Right lobe of liver (tissue), 6 donors: ENCODE measurements at regions of chr12 and their contacts with region 1.

Region 1: GRCh38 chr12:6335451-6336078 is 6.3 kb downstream of the TNFRSF1A start:
- DNase-seq: peak; percentile 83 to 88 (median 85)
- ATAC-seq: peak; percentile 38 to 54 (median 48)
- H3K4me3 ChIP-seq: peak overlapping the region; percentile 33 to 100 (median 51)
- H3K27ac ChIP-seq: peak overlapping the region; percentile 90 to 100 (median 97)
- H3K4me1 ChIP-seq: peaks cover 0 to 62% (median 24%) of the 10 kb centered on the region in 4 donors
- H3K27me3 ChIP-seq: no peaks in the 10 kb centered on the region
- CTCF ChIP-seq: peak; percentile 31 to 44 (median 35)
- POLR2A ChIP-seq: peak; percentile 42

Region 2: DNA sequence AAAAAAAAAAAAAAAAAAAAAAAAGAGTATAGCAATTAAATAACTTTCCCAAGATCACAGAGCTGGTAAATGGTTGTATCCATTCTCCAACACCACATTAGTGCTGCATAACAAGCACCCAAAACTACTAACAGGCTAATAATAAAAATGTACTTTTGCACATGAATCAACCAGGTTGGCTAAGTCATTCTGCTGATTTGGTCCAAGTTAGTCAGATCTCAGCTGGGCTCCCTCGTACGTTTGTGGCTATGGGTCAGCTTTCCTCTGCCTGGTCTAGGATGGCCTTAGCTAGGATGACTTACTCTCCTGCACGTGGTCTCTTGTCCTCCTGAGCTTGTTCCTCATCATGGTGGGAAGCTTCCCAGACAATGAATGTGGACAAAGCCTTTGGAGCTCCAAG is 32.9 kb before region 1 on chr12:
- intact Hi-C with region 1: no loop called
- DNase-seq: no peak
- ATAC-seq: no peak
- H3K4me3 ChIP-seq: no peak overlapping the region
- H3K27ac ChIP-seq: no peak overlapping the region
- H3K4me1 ChIP-seq: no peaks in the 10 kb centered on the region
- H3K27me3 ChIP-seq: no peaks in the 10 kb centered on the region
- CTCF ChIP-seq: no peak
- POLR2A ChIP-seq: no peak

Region 3: DNA sequence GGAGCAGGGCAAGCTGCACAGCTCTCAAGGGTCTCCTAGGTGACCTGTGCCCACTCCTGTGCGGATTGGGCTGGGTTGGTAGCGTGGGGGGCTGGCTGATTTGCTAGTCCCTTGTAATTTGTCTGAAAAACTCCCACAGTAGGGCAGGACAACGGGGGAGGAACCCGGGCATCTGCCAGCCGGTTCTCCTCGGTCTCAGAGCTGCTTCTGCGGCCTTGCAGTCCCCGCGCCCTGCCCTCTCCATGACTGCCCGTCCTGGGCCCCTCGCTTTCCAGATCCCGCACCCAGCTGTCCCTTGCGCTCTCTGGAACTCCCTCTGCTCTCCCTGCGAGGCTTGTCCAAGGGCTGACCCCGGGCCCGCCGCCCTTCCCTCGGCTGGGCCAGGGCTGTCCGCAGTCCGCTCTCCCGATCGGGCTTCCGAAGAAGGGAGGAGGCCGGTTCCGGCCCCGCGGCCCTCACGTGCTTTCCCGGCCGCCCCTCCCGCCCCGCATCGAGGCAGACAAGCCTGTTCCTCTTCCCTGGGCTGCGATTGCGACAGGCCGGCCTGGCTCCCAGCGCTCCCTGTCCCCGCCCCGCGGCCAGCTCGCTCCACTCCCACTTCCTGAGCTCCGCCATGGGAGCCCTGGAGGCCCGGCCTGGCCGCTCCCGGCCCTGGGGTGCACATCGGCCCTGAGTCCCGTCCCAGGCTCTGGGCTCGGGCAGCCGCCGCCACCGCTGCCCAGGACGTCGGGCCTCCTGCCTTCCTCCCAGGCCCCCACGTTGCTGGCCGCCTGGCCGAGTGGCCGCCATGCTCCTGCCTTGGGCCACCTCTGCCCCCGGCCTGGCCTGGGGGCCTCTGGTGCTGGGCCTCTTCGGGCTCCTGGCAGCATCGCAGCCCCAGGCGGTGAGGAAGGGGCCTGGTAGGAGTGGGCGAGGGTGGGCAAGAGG is 48.3 kb after region 1 on chr12 and contains the start of gene LTBR:
- intact Hi-C with region 1: loop called (anchors 10 kb)
- DNase-seq: peak; percentile 98 to 99 (median 99)
- ATAC-seq: peak; percentile 89 to 95 (median 92)
- H3K4me3 ChIP-seq: peak within 1 kb of the TSS; percentile 98 to 100 (median 99)
- H3K27ac ChIP-seq: peak within 1 kb of the TSS; percentile 93 to 97 (median 94)
- H3K4me1 ChIP-seq: peaks cover 0 to 32% (median 10%) of the 10 kb centered on the region in 4 donors
- H3K27me3 ChIP-seq: no peaks in the 10 kb centered on the region
- CTCF ChIP-seq: peak in 2 of 4 donors; percentile 11 to 28
- POLR2A ChIP-seq: peak; percentile 91
- total RNA-seq, gene LTBR: 83.8 to 235 (median 103) TPM

Region 4: DNA sequence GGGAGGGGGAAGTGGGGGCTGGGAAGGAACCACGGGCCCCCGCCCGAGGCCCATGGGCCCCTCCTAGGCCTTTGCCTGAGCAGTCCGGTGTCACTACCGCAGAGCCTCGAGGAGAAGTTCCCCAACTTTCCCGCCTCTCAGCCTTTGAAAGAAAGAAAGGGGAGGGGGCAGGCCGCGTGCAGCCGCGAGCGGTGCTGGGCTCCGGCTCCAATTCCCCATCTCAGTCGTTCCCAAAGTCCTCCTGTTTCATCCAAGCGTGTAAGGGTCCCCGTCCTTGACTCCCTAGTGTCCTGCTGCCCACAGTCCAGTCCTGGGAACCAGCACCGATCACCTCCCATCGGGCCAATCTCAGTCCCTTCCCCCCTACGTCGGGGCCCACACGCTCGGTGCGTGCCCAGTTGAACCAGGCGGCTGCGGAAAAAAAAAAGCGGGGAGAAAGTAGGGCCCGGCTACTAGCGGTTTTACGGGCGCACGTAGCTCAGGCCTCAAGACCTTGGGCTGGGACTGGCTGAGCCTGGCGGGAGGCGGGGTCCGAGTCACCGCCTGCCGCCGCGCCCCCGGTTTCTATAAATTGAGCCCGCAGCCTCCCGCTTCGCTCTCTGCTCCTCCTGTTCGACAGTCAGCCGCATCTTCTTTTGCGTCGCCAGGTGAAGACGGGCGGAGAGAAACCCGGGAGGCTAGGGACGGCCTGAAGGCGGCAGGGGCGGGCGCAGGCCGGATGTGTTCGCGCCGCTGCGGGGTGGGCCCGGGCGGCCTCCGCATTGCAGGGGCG is 198.5 kb after region 1 on chr12 and contains the start of gene GAPDH:
- intact Hi-C with region 1: loop called in 1 of 2 experiments (anchors 10 kb)
- DNase-seq: peak; percentile 94 to 97 (median 96)
- ATAC-seq: peak; percentile 70 to 83 (median 76)
- H3K4me3 ChIP-seq: peak within 1 kb of the TSS; percentile 82 to 99 (median 88)
- H3K27ac ChIP-seq: peak within 1 kb of the TSS; percentile 93 to 97 (median 95)
- H3K4me1 ChIP-seq: peaks cover 5 to 39% (median 20%) of the 10 kb centered on the region in 4 donors
- H3K27me3 ChIP-seq: no peaks in the 10 kb centered on the region
- CTCF ChIP-seq: no peak
- POLR2A ChIP-seq: peak; percentile 97
- total RNA-seq, gene GAPDH: 788 to 3,247 (median 1,580) TPM